ENCODE measurements at regions of chr2 and their contacts with region 1.

Region 1: DNA sequence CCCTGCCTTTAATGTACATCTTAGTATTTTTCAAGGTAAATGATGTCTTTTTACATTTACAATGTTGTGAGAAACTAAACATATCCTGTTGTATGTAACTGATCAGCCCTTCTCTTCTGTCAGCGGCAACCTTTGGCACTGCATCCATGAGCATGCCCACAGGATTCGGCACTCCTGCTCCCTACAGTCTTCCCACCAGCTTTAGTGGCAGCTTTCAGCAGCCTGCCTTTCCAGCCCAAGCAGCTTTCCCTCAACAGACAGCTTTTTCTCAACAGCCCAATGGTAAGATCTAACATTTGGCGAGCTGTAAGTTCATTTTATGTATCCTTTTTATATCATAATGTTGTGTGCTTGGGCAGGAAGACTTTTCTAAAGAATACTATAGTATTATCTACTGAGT is 46.9 kb upstream of the SCYGR2 start:
- DNase-seq: no peak
- H3K4me3 Mint-ChIP-seq: no peak overlapping the region
- H3K27ac Mint-ChIP-seq: no peak overlapping the region
- H3K4me1 Mint-ChIP-seq: no peaks in the 10 kb centered on the region
- H3K27me3 Mint-ChIP-seq: no peaks in the 10 kb centered on the region
- CTCF ChIP-seq: no peak

Region 2: DNA sequence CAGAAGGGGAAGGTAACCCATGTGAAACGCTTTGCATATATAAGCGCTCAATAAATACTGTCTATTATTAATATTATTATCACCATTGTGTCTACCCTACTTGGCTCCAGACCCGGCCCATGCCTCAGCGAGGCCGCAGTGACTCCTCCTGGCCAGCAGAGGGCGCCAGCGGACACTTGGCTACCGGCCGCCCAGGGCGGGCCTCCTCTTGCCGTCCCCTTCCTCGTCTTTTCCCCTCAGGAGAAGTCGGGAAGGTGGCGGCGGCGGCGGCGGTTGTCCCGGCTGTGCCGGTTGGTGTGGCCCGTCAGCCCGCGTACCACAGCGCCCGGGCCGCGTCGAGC is 79.9 kb before region 1 on chr2 and contains the start of gene AGFG1:
- CTCF ChIA-PET with region 1: interaction called, 3 read pairs
- POLR2A ChIA-PET with region 1: no interaction called
- intact Hi-C with region 1: loop called (anchors 10 kb)
- DNase-seq: peak; percentile 83
- H3K4me3 Mint-ChIP-seq: peak within 1 kb of the TSS; percentile 89
- H3K27ac Mint-ChIP-seq: peak within 1 kb of the TSS; percentile 79
- H3K4me1 Mint-ChIP-seq: peaks cover 25% of the 10 kb centered on the region
- H3K27me3 Mint-ChIP-seq: no peaks in the 10 kb centered on the region
- CTCF ChIP-seq: peak; percentile 98
- total RNA-seq, gene AGFG1: 74.2 and 86.1 TPM in 2 replicates

Region 3: GRCh38 chr2:227509824-227510619 is 41.8 kb before region 1 on chr2:
- CTCF ChIA-PET with region 1: no interaction called
- POLR2A ChIA-PET with region 1: no interaction called
- intact Hi-C with region 1: no loop called
- DNase-seq: peak; percentile 69
- H3K4me3 Mint-ChIP-seq: no peak overlapping the region
- H3K27ac Mint-ChIP-seq: peak overlapping the region; percentile 55
- H3K4me1 Mint-ChIP-seq: peaks cover 35% of the 10 kb centered on the region
- H3K27me3 Mint-ChIP-seq: no peaks in the 10 kb centered on the region
- CTCF ChIP-seq: no peak

Measured in MCF 10A (cell line).